Dorsolateral prefrontal cortex (tissue), 120 donors: ENCODE measurements at regions of chr2 and their contacts with region 1.

Region 1: GRCh38 chr2:130873700-130874346 is 37.1 kb downstream of the ARHGEF4 start:
- DNase-seq: peak; percentile 64 to 88 (median 79)
- H3K4me3 ChIP-seq: no peak overlapping the region
- H3K27ac ChIP-seq: peak overlapping the region in 47 of 59 donors; percentile 4 to 92 (median 61)
- H3K27me3 ChIP-seq: no peaks in the 10 kb centered on the region
- CTCF ChIP-seq: peak; percentile 43 to 86 (median 73)

Region 2: GRCh38 chr2:130824492-130825061 is 49.2 kb before region 1 on chr2:
- intact Hi-C with region 1: loop called (anchors 1 to 10 kb)
- DNase-seq: peak in 5 of 10 donors; percentile 54 to 72 (median 55)
- H3K4me3 ChIP-seq: no peak overlapping the region
- H3K27ac ChIP-seq: peak overlapping the region in 58 of 59 donors; percentile 42 to 95 (median 86)
- H3K27me3 ChIP-seq: peaks cover 0 to 5% (median 0%) of the 10 kb centered on the region in 45 donors
- CTCF ChIP-seq: no peak

Region 3: DNA sequence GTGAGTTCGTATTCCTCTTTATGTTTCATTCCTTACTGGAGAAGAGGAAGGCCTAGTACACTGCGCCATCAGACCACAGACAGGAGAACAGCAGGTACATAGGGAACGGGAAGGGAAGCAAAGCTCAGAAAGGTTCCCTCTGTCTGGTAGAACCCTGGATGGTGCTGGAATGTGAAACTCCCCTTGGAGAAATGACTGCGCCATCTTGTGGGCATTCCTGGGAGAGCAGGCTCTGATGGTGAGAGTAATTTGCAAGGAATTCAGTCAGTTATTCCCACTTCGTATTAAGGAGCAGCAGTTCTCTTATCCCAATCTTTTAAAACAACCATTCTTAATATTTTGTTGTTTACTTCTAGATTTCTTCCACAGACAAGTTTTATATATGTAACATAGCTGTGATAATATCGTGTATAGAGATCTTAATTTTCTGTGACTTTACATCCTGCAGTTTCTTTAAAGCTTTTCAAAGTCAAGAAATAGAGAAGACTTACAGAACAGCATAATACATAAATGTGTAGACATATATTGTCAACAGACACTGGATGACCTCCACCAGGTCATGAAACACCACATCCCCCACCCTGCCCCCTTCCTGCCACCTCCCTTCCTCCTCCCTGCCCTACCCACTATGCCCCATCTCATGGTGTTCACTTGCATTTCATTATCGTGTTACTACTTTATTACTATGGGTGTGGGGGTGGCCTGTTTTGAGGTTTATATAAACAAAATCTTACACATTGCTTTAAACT is 46.8 kb after region 1 on chr2:
- intact Hi-C with region 1: loop called in 1 of 2 experiments (anchors 2 kb)
- DNase-seq: peak; percentile 69 to 91 (median 82)
- H3K4me3 ChIP-seq: no peak overlapping the region
- H3K27ac ChIP-seq: peak overlapping the region in 6 of 59 donors; percentile 1 to 55 (median 22)
- H3K27me3 ChIP-seq: peaks cover 0 to 18% (median 5%) of the 10 kb centered on the region in 45 donors
- CTCF ChIP-seq: peak; percentile 76 to 97 (median 91)